Dendritic cell treated with granulocyte-macrophage colony-stimulating factor and Interleukin-4, amounts not matched to agents 40 ng/mL and 50 ng/mL, for 4 days (primary cell): ENCODE measurements at regions of chr4 and their contacts with region 1.

Region 1: DNA sequence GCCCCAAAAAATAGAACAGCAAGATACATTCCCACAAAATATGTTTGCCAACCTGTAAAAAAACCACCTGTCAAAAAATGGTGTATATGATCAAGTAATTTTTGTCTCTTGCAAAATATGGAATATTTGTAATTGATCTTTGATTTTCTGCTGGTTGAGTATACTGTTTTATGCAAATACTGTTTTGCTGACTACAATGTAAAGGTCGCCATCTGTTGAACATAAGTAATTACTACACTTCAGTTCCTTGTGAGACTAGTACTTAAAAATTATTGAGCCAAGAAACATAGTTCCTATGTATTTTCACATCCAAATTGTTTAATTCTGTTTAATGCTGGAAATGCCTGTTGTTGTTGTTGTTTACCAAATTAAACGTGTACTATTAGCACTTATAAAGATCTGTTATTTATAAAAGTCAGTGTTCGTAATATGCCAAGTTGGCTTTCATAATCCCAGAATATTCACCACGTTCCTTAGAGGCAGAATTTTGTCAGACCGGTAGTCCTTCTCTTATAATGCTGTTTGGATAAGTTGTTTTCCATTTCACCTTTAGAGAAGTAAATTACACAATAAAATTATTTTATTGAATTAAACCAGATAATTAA is 144.2 kb downstream of the PDLIM5 start:
- H3K4me3 Mint-ChIP-seq: no peak overlapping the region
- H3K27ac Mint-ChIP-seq: no peak overlapping the region
- H3K4me1 Mint-ChIP-seq: no peaks in the 10 kb centered on the region
- H3K27me3 Mint-ChIP-seq: no peaks in the 10 kb centered on the region

Region 2: GRCh38 chr4:94304365-94304971 is 291.5 kb before region 1 on chr4:
- intact Hi-C with region 1: loop called (anchors 5 kb)
- H3K4me3 Mint-ChIP-seq: no peak overlapping the region
- H3K27ac Mint-ChIP-seq: no peak overlapping the region
- H3K4me1 Mint-ChIP-seq: no peaks in the 10 kb centered on the region
- H3K27me3 Mint-ChIP-seq: no peaks in the 10 kb centered on the region

Region 3: DNA sequence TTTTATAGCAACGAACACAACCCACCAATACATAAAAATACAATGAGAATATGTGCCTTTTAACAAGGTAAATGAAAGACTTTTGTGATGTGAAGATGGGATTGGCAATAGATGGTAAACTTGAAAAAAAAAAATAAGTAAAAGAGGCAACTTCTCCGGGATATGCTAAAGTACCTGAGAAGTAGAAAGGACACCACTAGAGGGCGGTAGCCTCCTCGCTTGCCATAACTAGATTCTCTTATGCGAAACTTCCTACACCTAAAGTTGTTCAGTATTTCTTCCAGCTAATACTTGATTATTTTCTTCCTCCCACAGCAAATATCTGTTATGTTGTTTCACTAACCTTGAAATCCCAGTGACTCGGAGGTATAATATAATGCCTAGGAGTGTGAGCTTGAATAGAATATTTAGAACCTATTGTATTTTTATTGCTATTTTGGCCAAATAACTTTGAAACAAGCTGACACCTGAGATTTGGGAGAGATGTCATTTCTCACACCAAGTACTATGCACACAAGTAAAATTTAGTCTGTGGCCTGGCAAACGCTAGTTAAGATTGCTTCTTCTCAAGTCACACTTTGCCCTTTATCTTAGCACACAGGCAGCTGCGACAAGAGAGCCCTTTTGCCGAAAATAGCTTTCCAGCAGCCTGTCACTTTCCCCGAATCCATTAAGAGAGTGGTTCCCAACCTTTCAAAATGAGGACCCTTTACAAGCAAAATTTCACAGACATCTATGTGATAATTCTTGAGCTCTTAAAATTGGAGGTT is 189.1 kb before region 1 on chr4:
- intact Hi-C with region 1: loop called (anchors 1 kb)
- H3K4me3 Mint-ChIP-seq: no peak overlapping the region
- H3K27ac Mint-ChIP-seq: no peak overlapping the region
- H3K4me1 Mint-ChIP-seq: no peaks in the 10 kb centered on the region
- H3K27me3 Mint-ChIP-seq: no peaks in the 10 kb centered on the region

Region 4: DNA sequence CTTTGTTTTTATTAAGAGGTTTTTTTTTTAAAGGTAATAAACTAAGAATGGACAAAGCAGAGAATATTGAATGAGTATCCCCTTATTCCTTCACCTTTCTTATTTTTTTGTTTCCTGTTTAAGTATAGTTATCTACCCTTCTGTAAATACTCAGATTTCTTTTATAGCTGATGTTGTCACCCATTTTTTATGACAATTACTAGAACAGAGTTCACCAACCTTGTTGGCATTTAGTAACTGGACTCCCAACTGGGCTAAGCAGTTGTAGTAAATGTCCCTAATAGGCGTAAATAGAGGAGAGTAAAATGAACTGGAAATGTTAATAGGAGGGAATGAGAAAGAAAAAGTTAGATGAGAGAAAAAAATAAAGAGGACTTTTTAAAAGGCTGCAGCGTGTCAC is 134.5 kb before region 1 on chr4:
- intact Hi-C with region 1: no loop called
- H3K4me3 Mint-ChIP-seq: no peak overlapping the region
- H3K27ac Mint-ChIP-seq: no peak overlapping the region
- H3K4me1 Mint-ChIP-seq: peaks cover 46% of the 10 kb centered on the region
- H3K27me3 Mint-ChIP-seq: no peaks in the 10 kb centered on the region

Region 5: DNA sequence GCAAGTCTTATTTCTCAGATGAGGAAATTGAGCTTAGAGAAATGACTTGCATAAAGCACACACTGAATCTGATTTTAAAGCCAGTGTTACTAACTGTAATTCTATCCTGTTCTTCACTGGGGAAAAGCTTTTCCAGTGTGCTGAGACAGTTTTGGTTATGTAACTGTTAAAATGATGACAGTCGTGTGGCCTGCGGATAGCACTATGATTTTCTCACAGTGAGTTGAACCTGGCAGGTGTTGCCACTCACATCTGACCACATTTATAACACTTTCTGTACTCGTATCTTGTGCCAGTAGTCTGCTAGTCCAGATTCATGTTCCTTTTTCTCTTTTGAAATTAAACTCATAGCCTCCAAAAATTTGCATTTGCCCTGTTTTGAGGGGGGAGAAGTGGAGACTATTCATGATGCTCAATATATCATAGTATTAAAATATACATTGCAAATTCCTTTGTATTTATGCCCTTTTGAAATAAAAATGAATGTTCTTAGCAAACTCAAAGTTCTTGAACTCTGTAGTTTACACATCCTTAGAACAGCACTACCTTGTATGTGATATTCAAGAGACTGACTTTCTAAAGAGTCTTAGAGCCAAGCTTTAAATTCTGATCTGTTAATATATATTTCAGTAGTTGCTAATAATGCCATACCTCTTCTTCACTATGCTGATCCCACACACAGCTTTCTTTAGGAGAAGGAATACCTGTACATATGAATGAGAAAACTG is 11.9 kb before region 1 on chr4:
- intact Hi-C with region 1: no loop called
- H3K4me3 Mint-ChIP-seq: no peak overlapping the region
- H3K27ac Mint-ChIP-seq: no peak overlapping the region
- H3K4me1 Mint-ChIP-seq: no peaks in the 10 kb centered on the region
- H3K27me3 Mint-ChIP-seq: no peaks in the 10 kb centered on the region

Region 6: DNA sequence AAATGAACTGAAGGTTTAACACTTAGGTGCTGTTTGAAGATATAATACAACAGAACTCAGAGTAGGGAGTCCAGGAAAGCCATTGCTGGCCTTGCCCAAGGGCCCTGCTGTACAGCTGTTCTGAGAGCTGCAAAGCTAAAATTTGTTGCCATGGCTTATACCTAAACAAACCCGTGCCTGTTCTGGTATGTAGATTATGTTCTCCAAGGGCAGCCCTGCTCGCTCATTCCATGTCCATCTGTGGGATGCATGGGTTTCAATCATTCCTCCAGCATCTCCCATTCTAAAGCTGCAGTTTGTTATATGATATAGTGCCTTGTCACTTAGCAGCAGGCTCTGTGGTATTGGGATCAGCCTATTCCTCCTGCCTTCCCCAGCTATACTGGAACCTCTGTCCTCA is 81.0 kb after region 1 on chr4:
- intact Hi-C with region 1: no loop called
- H3K4me3 Mint-ChIP-seq: no peak overlapping the region
- H3K27ac Mint-ChIP-seq: no peak overlapping the region
- H3K4me1 Mint-ChIP-seq: no peaks in the 10 kb centered on the region
- H3K27me3 Mint-ChIP-seq: no peaks in the 10 kb centered on the region